ENCODE measurements at regions of chr10 and their contacts with region 1.

Region 1: GRCh38 chr10:29386342-29386999 is 97.6 kb downstream of the LYZL1 start:
- DNase-seq: no peak
- H3K4me3 ChIP-seq: no peak overlapping the region
- H3K27ac ChIP-seq: no peak overlapping the region
- H3K4me1 ChIP-seq: no peaks in the 10 kb centered on the region
- H3K27me3 ChIP-seq: no peaks in the 10 kb centered on the region
- CTCF ChIP-seq: peak; percentile 75 to 83 (median 78)
- POLR2A ChIP-seq: no peak

Region 2: DNA sequence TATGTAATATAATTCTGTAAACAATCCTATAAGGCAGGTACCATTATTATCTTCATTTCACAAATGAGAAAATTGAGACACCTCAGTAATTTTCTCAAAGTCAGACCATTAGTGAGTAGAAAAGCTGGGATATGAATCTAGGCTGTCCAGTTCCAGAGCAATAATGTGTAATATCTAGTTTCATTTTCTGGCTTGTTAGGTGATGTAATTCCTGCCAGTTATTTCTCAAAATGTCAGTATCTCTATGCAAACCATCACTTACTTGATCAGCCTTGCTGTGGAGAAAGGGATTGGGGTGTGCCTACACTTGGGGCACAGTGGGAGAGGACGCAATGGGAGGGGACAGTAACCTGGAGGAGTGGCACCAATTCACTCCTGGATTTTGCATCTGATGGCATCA is 59.9 kb after region 1 on chr10:
- intact Hi-C with region 1: loop called (anchors 5 kb)
- DNase-seq: no peak
- H3K4me3 ChIP-seq: no peak overlapping the region
- H3K27ac ChIP-seq: no peak overlapping the region
- H3K4me1 ChIP-seq: peaks cover 6% of the 10 kb centered on the region
- H3K27me3 ChIP-seq: no peaks in the 10 kb centered on the region
- CTCF ChIP-seq: no peak
- POLR2A ChIP-seq: no peak

Region 3: DNA sequence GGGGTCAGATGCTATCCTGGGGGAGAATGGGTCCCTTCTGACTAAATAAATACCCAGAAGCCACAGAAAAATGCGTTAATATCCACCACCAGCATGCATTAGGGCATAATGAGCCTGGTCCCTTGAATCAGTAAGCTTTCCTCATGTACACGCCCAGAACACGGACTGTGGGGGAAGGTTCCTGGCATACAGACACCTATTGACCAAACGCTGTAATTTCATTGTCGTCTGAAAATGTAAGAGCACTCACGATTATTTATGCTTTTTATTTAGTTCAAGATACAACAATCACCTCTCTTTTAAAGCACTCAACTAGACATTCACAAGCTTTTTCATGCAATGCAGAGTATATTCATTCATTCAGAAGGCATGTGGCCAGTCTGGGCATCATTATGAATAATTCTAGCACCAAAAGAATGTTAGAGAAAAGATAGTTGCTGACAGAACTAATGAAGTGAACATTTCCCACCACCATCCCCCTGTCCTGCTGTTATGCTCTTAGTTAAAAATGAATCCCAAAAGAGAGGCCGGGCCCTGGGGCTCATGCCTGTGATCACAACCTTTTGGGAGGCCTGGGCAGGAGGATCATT is 147.3 kb after region 1 on chr10:
- intact Hi-C with region 1: no loop called
- DNase-seq: no peak
- H3K4me3 ChIP-seq: no peak overlapping the region
- H3K27ac ChIP-seq: peak overlapping the region in 1 of 2 donors; percentile 81
- H3K4me1 ChIP-seq: peaks cover 26% of the 10 kb centered on the region
- H3K27me3 ChIP-seq: no peaks in the 10 kb centered on the region
- CTCF ChIP-seq: no peak
- POLR2A ChIP-seq: no peak